Gastrocnemius medialis (tissue), 4 donors: ENCODE measurements at regions of chr12 and their contacts with region 1.

Region 1: DNA sequence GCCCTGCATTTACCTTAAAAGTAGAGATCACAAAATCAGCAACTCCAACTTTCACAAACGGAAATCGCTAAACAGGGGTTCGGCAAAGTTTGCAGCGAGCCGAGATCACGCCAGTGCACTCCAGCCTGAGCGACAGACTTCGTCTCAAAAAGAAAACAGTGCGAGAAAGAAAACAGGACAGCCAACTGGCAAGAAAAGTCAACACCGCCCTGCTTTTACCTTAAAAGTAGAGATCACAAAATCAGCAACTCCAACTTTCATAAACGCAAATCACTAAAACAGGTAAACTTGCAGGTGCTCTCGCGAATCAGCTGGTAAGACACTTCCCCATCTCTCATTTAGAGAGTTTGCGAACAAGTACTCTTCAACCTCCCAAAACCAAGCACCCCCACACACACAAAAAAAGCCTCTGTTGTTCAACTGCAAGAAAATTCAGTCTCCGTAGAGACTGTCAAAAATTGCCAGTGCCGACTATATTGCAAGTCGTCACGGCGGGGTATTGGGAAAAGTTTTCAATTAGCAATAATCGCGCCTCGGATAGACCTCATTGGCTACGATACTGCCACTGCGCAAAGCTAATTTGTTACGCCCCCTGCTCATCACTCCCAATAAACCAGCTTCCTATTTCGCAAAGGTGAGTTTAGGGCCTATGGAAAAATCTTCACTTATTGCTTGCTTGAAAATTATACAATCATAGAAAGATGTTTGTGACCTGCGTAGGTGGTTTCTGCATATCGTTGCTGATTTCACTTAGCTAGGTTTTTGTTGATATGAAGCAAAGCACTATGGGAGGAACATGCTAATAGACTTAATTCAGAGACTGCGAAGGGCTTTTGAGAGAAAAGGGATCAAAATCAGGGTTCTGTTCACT is at the start of gene RNU4-1:
- DNase-seq: peak; percentile 62 to 72
- ATAC-seq: peak; percentile 38 to 42
- H3K4me3 ChIP-seq: peak within 1 kb of the TSS; percentile 55 to 84 (median 78)
- H3K27ac ChIP-seq: peak within 1 kb of the TSS; percentile 92 to 97 (median 96)
- H3K4me1 ChIP-seq: peaks cover 0 to 5% of the 10 kb centered on the region in 2 donors
- H3K27me3 ChIP-seq: no peaks in the 10 kb centered on the region
- CTCF ChIP-seq: no peak
- POLR2A ChIP-seq: peak; percentile 85 to 86
- total RNA-seq, gene RNU4-1: under 0.01 TPM in 1 of 4 donors, not detected in the others

Region 2: GRCh38 chr12:120116792-120117651 is 175.9 kb before region 1 on chr12:
- in situ Hi-C with region 1: no loop called
- intact Hi-C with region 1: loop called (anchors 5 kb)
- DNase-seq: peak; percentile 90 to 92
- ATAC-seq: peak; percentile 88 to 91
- H3K4me3 ChIP-seq: peak overlapping the region; percentile 69 to 99 (median 86)
- H3K27ac ChIP-seq: peak overlapping the region; percentile 89 to 99 (median 98)
- H3K4me1 ChIP-seq: peaks cover 42 to 49% of the 10 kb centered on the region in 2 donors
- H3K27me3 ChIP-seq: no peaks in the 10 kb centered on the region
- CTCF ChIP-seq: no peak
- POLR2A ChIP-seq: peak; percentile 90 to 93

Region 3: GRCh38 chr12:120228291-120229070 is 64.4 kb before region 1 on chr12:
- in situ Hi-C with region 1: no loop called
- intact Hi-C with region 1: loop called (anchors 1 kb)
- DNase-seq: peak; percentile 71 to 87
- ATAC-seq: peak; percentile 30 to 48
- H3K4me3 ChIP-seq: peak overlapping the region in 3 of 4 donors; percentile 6 to 27 (median 10)
- H3K27ac ChIP-seq: peak overlapping the region; percentile 97 to 99 (median 98)
- H3K4me1 ChIP-seq: peaks cover 81 to 86% of the 10 kb centered on the region in 2 donors
- H3K27me3 ChIP-seq: no peaks in the 10 kb centered on the region
- CTCF ChIP-seq: peak; percentile 97 to 99 (median 98)
- POLR2A ChIP-seq: no peak

Region 4: GRCh38 chr12:120265473-120266179 is 27.3 kb before region 1 on chr12 and contains the start of gene PXN:
- in situ Hi-C with region 1: no loop called
- intact Hi-C with region 1: loop called (anchors 2 kb)
- DNase-seq: peak; percentile 78 to 86
- ATAC-seq: peak; percentile 74
- H3K4me3 ChIP-seq: peak within 1 kb of the TSS; percentile 86 to 93 (median 90)
- H3K27ac ChIP-seq: peak within 1 kb of the TSS; percentile 93 to 99 (median 98)
- H3K4me1 ChIP-seq: peaks cover 37 to 41% of the 10 kb centered on the region in 2 donors
- H3K27me3 ChIP-seq: no peaks in the 10 kb centered on the region
- CTCF ChIP-seq: peak; percentile 81 to 96 (median 93)
- POLR2A ChIP-seq: peak; percentile 90 to 92
- total RNA-seq, gene PXN: 48.8 to 102 (median 77.9) TPM

Region 5: DNA sequence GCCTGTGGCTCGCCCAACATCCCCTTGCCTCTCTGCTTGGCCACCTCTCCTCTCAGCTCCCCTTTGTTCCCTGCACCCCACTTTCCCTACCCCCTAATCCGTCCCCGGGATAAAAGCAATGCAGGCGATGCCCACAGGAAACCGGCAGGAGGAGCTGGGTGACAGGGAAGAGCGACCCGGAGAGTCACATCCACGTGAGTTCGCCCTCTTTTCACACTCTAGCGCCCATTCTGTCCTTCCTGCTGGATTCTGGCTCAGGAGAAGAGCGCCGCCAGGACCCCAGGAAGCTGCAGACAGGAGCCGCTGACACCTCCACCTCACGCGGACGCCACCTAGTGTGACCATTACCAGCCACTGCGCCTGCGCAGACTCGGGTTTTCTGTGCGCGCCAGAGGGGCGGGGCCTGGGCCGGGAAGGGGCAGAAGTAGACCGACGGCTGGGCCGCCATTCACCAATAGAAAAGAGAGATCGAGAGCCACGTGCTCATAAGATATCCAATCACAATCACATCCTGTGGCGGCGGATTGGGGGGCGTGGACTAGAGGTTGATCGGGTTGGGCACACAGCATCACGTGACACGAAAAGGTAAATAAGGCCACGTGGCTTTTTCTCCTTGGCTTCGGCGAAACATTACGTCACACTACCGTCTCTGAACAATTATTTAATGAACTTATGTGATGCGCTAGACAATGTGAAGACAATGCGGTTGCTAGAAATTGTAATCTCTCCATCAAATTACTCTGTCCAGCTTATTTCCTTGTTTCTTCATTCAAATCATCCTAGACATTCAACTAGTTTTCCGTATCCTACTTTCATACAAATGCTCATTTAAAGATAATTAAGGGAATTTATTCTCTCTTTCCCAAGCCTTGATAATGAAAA is 24.6 kb after region 1 on chr12:
- in situ Hi-C with region 1: no loop called
- intact Hi-C with region 1: loop called (anchors 1 kb)
- DNase-seq: peak; percentile 99 to 100
- ATAC-seq: peak; percentile 99
- H3K4me3 ChIP-seq: peak overlapping the region; percentile 67 to 81 (median 73)
- H3K27ac ChIP-seq: peak overlapping the region; percentile 92 to 96 (median 94)
- H3K4me1 ChIP-seq: peaks cover 3 to 7% of the 10 kb centered on the region in 2 donors
- H3K27me3 ChIP-seq: no peaks in the 10 kb centered on the region
- CTCF ChIP-seq: peak; percentile 55 to 70 (median 62)
- POLR2A ChIP-seq: peak; percentile 78 to 86

Region 6: DNA sequence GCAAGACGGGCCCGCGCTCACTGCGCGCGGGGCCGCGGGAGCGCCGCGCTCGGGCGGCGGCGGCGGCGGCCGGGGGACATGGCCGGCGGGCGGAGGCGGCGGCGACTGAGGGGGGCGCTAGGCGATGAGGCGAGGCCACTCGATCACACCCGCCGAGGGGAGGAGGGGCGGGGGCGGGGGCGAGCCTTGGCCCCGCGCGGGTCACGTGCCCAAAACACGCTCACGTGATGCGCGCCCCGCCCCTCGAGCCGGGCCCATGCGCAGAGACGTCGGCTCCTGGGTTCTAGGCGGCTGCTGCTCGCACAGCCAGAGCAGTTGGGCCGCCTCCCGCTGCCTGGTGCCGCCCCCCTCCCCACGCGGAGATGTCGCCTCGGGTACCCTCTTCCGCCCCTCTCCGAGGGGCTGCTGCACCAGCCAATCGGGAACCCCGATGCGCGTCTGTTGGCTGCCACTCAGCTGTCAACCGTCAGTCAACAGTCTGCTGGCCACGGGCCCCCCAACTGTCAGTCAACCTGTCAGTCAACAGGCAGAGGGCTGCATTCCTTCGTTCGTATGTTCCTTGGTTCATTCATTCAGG is 611.4 kb after region 1 on chr12 and contains the start of gene SPPL3:
- in situ Hi-C with region 1: no loop called
- intact Hi-C with region 1: loop called (anchors 10 kb)
- DNase-seq: peak; percentile 82 to 89
- ATAC-seq: peak; percentile 84 to 85
- H3K4me3 ChIP-seq: peak within 1 kb of the TSS; percentile 89 to 99 (median 96)
- H3K27ac ChIP-seq: peak within 1 kb of the TSS; percentile 91 to 98 (median 94)
- H3K4me1 ChIP-seq: peaks cover 27 to 30% of the 10 kb centered on the region in 2 donors
- H3K27me3 ChIP-seq: no peaks in the 10 kb centered on the region
- CTCF ChIP-seq: peak in 1 of 5 experiments; percentile 33
- POLR2A ChIP-seq: peak; percentile 76 to 86
- total RNA-seq, gene SPPL3: 10.1 to 21.3 (median 10.6) TPM

Region 7: GRCh38 chr12:121626087-121626852 is 1333.4 kb after region 1 on chr12 and contains the start of gene ORAI1:
- in situ Hi-C with region 1: no loop called
- intact Hi-C with region 1: loop called (anchors 5 kb)
- DNase-seq: peak; percentile 94 to 96
- ATAC-seq: peak; percentile 83 to 85
- H3K4me3 ChIP-seq: peak within 1 kb of the TSS; percentile 72 to 86 (median 80)
- H3K27ac ChIP-seq: peak within 1 kb of the TSS; percentile 93 to 96 (median 96)
- H3K4me1 ChIP-seq: peaks cover 41 to 52% of the 10 kb centered on the region in 2 donors
- H3K27me3 ChIP-seq: no peaks in the 10 kb centered on the region
- CTCF ChIP-seq: peak in 4 of 5 experiments; percentile 34 to 49 (median 43)
- POLR2A ChIP-seq: peak; percentile 97
- total RNA-seq, gene ORAI1: 9.9 to 29.0 (median 16.4) TPM